HEK293 (cell line): ENCODE measurements at regions of chrX and their contacts with region 1.

Region 1: DNA sequence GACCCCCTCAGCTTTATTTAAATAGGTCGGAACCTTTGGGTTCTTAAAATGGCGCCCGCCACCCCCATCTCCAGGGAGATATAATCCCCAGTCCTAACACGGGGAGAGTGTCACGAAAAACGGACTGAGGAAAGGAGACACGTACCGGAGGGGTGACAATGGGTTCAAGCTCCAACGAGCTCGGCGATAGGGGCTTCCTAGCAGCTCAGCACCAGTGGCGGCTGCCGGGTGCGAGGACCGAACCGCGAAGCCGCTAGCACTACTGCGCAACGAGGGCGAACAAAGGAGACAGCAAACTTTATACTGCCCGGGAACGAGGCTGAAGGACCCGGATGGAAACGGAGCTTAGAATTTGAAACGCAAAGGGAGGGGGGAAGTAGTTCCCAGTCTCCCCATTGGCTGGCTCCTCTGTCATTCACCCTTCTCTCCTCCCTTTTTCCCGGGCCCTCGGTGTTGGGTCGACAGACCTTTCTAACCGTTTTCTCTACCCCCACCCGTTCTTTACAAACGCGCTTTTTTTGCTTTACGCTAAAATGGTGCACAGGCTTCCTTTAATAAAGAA is at the start of gene RBMX:
- H3K4me3 ChIP-seq: peak within 1 kb of the TSS; percentile 49
- H3K27ac ChIP-seq: peak within 1 kb of the TSS; percentile 78
- H3K4me1 ChIP-seq: no peaks in the 10 kb centered on the region
- CTCF ChIP-seq: no peak

Region 2: DNA sequence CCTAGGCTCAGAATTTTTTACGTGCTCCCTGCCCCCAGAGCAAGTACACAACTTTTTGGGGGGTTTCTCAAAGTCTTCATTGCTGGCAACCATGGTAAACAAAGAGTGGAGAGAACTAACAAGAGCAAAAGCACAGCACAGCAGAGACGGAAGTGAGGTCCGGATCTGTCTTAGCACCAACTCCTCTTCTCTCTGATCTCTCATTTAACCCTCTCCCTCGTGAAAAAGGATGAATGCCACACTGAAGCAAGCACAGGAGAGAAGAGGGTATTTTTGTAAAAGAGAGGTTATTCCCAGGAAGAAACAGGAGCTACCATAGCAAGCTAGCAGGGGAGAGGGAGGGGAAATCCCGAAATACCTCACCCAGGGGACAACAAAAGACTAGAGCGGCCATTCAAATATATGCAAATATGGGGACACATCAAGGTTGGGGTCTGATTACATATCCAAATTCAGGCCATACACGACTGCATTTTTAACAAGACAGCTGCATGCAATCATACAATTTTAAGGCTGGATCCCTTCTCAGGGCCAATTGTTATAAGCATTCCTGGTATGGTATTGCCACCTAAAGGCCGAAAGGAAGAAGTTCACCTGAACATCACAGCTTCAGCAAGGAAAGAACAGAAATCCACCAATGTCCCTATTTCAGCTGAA is 186.0 kb before region 1 on chrX:
- CTCF ChIA-PET with region 1: no interaction called
- POLR2A ChIA-PET with region 1: no interaction called
- H3K4me3 ChIP-seq: no peak overlapping the region
- H3K27ac ChIP-seq: no peak overlapping the region
- H3K4me1 ChIP-seq: no peaks in the 10 kb centered on the region
- CTCF ChIP-seq: peak; percentile 62; the same call in 1 of the 2 replicates

Region 3: GRCh38 chrX:136767104-136767941 is 113.2 kb before region 1 on chrX:
- CTCF ChIA-PET with region 1: no interaction called
- POLR2A ChIA-PET with region 1: interaction called, 11 read pairs
- H3K4me3 ChIP-seq: peak overlapping the region; percentile 51
- H3K27ac ChIP-seq: peak overlapping the region; percentile 68; the same call in 1 of the 2 replicates
- H3K4me1 ChIP-seq: peaks cover 9% of the 10 kb centered on the region
- CTCF ChIP-seq: peak; percentile 87

Region 4: GRCh38 chrX:136866337-136867095 is 14.0 kb before region 1 on chrX:
- CTCF ChIA-PET with region 1: no interaction called
- POLR2A ChIA-PET with region 1: interaction called, 24 read pairs
- H3K4me3 ChIP-seq: no peak overlapping the region
- H3K27ac ChIP-seq: no peak overlapping the region; the same call in 1 of the 2 replicates
- H3K4me1 ChIP-seq: no peaks in the 10 kb centered on the region
- CTCF ChIP-seq: no peak

Region 5: DNA sequence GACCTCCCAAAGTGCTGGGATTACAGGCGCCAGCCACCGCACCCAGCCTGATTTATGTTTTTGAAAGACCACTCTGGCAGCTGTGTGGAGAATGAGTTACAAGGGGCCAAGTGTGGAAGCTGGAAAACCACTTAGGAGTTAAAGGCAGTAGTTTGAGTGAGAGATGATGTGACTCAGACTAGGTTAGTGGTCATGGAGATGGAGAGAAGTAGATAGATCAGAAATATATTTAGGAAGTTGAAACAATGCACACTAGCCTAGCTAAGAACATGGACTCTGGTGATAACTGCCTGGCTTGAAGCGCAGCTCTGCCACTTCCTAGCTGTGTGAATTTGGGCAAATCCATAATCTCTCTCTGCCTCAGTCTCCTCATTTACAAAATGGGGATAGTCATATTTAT is 11.9 kb after region 1 on chrX:
- CTCF ChIA-PET with region 1: no interaction called
- POLR2A ChIA-PET with region 1: interaction called, 22 read pairs
- H3K4me3 ChIP-seq: no peak overlapping the region
- H3K27ac ChIP-seq: no peak overlapping the region
- H3K4me1 ChIP-seq: no peaks in the 10 kb centered on the region
- CTCF ChIP-seq: no peak

Region 6: DNA sequence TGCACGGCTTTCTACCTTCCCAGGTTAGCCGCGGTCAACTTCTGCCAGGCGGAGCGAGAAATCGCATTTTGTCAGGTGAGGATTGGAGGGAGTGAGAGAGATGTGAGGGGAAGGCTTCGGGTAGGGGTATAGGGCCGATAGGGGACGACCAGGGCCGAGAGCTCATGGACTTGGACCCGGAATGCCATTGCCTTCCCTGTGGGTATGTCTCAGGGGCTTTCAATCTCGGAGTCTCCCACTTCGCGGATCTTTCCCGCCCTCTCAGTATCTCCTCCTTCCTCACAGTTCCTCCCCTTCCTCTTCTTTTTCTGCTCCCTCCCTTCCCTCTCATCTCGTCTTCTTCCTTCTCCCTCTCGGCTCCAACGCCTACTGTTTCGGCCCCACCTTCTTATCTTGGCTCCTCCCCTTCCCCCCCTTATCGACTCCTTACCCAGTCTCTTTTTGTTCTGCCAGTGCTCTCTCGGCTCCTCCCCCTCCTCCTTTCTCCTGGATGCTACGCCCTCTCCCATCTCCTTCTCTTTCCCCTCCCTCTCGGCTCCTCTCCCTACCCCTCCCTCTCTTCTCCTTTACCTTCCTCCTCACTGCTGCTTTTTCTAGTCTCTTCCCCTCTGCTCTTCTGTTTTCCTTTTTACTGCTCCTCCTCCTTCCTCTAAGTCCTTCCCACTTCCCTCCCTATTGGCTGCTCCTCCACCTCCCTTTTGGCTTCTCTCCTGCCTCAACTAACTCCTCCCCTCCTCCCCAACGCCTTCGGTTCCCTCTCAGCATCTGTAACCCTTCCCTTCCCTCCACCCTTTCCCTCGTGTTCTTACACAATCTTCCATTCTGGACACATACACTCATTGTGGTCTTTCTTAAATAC is 29.4 kb after region 1 on chrX:
- CTCF ChIA-PET with region 1: interaction called, 4 read pairs
- POLR2A ChIA-PET with region 1: interaction called, 46 read pairs
- H3K4me3 ChIP-seq: peak overlapping the region; percentile 50
- H3K27ac ChIP-seq: peak overlapping the region; percentile 80
- H3K4me1 ChIP-seq: no peaks in the 10 kb centered on the region
- CTCF ChIP-seq: no peak